ENCODE measurements at regions of chr11 and their contacts with region 1.

Region 1: GRCh38 chr11:72091005-72091691 is 10.5 kb downstream of the LRRC51 start:
- DNase-seq: peak; percentile 76
- H3K4me3 Mint-ChIP-seq: no peak overlapping the region
- H3K27ac Mint-ChIP-seq: no peak overlapping the region
- H3K4me1 Mint-ChIP-seq: peaks cover 11% of the 10 kb centered on the region
- H3K27me3 Mint-ChIP-seq: no peaks in the 10 kb centered on the region

Region 2: DNA sequence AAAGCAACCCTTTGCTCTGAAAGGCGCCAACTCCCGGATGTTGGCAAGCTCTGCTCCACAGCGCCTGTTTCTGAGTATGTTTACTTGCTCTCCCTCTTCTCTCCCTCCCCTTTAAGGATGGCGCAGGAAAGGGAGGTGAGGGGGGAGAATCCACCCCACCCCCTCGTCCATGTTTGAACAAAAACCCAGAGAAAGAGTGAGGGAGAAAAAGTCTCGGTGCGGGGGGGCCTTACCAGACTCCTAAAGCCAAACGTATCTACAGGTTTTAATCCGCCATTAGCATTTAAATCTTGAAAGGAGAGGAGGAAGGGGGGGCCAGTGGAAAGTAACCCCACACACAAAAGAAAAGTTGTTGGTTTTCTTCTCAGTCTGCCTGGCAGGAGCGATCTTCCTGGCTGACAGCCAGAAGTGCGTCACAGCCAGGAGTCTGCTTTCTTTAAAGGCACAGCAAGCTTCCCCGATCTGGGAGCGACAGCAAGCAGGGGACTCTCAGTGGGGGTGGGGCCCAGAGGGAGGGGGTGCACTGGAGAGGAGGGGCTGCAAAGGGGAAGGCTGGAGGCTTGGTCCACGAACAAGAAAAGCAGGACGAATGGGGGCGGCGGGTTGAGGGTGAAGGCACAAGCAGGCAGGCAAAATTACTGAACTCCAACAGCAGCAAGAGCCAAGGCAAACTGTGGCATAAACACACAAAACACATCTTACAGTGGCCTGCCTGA is 50.3 kb before region 1 on chr11:
- CTCF ChIA-PET with region 1: interaction called, 18 read pairs
- POLR2A ChIA-PET with region 1: no interaction called
- intact Hi-C with region 1: no loop called
- DNase-seq: peak; percentile 83
- H3K4me3 Mint-ChIP-seq: no peak overlapping the region
- H3K27ac Mint-ChIP-seq: no peak overlapping the region
- H3K4me1 Mint-ChIP-seq: peaks cover 34% of the 10 kb centered on the region
- H3K27me3 Mint-ChIP-seq: no peaks in the 10 kb centered on the region

Region 3: GRCh38 chr11:72363112-72363511 is 272.0 kb after region 1 on chr11:
- CTCF ChIA-PET with region 1: no interaction called
- POLR2A ChIA-PET with region 1: no interaction called
- intact Hi-C with region 1: no loop called
- DNase-seq: no peak
- H3K4me3 Mint-ChIP-seq: no peak overlapping the region
- H3K27ac Mint-ChIP-seq: no peak overlapping the region
- H3K4me1 Mint-ChIP-seq: no peaks in the 10 kb centered on the region
- H3K27me3 Mint-ChIP-seq: no peaks in the 10 kb centered on the region

Region 4: DNA sequence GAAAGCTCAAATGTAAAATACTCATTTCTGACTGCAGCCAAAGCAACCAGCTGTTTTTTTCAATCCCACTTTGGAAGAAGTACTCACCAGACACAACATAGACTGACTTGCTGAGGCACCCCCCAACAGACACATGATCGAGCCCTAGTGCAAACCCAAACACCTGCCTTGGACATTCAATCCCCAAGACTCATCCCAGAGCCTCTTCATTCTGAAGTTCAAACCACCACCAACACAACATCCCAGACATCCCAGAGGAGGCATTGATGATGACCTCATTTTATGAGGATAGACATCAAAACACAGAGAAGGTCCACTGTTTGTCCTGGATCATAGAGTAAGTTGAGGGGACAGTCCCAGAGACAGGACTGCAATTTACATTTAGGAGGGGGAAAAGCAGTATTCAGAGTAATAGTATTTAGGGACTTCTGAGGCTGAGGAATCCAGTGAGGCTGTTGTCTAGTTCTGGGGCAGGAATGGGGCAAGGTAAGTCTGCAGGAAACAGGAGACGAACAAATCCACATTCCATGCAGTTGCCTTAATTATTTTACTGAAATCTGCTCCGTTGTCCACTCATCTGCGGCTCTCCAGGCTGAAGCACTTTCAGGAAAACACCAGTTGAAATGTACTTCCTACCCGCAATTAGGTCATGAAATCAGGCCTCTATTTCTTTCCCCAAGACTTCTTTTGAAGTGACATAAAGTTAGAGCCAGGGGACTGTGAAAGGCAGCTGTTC is 288.4 kb after region 1 on chr11:
- CTCF ChIA-PET with region 1: no interaction called
- POLR2A ChIA-PET with region 1: no interaction called
- intact Hi-C with region 1: no loop called
- DNase-seq: no peak
- H3K4me3 Mint-ChIP-seq: no peak overlapping the region
- H3K27ac Mint-ChIP-seq: no peak overlapping the region
- H3K4me1 Mint-ChIP-seq: no peaks in the 10 kb centered on the region
- H3K27me3 Mint-ChIP-seq: no peaks in the 10 kb centered on the region

Region 5: DNA sequence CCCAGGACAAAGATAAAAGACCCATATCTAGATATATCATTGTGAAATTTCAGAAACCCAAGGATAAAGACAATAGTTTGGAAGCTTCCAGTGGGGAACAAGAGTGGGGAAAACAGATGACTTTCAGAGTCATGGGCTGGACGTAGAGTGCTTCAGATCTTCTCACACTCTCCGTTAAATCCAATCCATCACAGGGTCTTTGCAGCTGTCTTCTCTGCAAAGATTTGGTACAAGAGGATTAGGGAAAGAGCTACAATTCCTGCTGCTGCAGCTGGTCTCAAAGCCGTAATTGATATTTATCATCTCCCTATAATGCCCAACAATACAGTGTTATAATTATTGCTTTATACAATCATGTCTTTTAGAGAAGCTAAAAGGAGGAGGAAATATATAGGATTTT is 406.6 kb after region 1 on chr11:
- CTCF ChIA-PET with region 1: no interaction called
- POLR2A ChIA-PET with region 1: no interaction called
- intact Hi-C with region 1: no loop called
- DNase-seq: no peak
- H3K4me3 Mint-ChIP-seq: no peak overlapping the region
- H3K27ac Mint-ChIP-seq: no peak overlapping the region
- H3K4me1 Mint-ChIP-seq: peaks cover 6% of the 10 kb centered on the region
- H3K27me3 Mint-ChIP-seq: peaks cover 2% of the 10 kb centered on the region